ENCODE measurements at regions of chr15 and their contacts with region 1.

Region 1: GRCh38 chr15:84716036-84716799 is at the start of gene SEC11A:
- DNase-seq: peak; percentile 93
- ATAC-seq: peak; percentile 98
- H3K4me3 Mint-ChIP-seq: peak within 1 kb of the TSS; percentile 95
- H3K27ac Mint-ChIP-seq: peak within 1 kb of the TSS; percentile 98
- H3K4me1 Mint-ChIP-seq: peaks cover 55% of the 10 kb centered on the region
- H3K27me3 Mint-ChIP-seq: no peaks in the 10 kb centered on the region
- total RNA-seq, gene SEC11A: 117 to 119 TPM

Region 2: DNA sequence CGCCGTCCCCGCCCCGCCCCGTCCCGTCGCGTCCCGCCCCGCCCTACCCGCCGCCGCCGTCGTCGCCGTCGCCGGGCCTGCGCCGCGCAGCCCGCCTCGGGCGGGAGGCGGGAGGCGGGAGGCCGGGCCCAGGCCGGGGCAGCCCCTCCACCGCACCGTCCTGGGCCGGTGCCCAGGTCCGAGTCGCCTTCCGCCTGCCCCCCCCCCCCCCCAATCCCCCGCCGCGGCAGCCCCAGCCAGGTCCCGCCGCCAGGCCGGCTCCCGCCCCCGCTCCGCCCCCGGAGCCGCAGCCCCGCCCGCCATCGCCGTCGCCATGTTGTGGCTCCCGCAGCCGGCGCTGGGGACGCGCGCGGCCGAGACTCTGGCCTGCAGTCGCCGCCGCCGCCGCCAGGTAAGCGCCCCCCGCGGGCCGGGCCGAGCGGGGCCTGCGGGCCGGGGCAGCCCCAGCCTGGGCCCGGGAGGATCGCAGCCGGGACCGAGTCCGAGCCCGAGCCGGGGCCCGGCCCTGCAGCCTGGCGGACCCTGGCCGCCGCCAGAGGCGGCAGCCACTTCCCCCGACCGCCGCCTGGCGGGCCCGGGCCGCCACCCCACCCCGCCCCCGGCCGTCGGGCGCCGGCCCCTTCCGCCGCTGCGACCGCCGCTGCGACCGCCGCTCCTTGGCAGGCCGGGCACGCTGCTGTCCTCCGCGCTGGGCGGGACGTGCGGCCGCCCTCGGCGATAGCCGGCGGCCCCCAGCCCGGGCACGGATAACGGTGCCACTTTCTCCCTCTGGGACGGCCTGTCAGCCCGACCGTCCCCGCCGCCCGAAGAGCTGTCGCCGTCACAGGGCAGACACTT is 32.3 kb after region 1 on chr15 and contains the start of gene ZNF592:
- CTCF ChIA-PET with region 1: interaction called, 16 read pairs
- POLR2A ChIA-PET with region 1: interaction called, 74 read pairs
- DNase-seq: peak; percentile 82
- ATAC-seq: peak; percentile 68
- H3K4me3 Mint-ChIP-seq: peak within 1 kb of the TSS; percentile 96
- H3K27ac Mint-ChIP-seq: peak within 1 kb of the TSS; percentile 95
- H3K4me1 Mint-ChIP-seq: peaks cover 51% of the 10 kb centered on the region
- H3K27me3 Mint-ChIP-seq: no peaks in the 10 kb centered on the region
- total RNA-seq, gene ZNF592: 36.5 to 36.6 TPM

Region 3: GRCh38 chr15:84836844-84837243 is 120.6 kb after region 1 on chr15:
- CTCF ChIA-PET with region 1: no interaction called
- POLR2A ChIA-PET with region 1: no interaction called
- DNase-seq: no peak
- ATAC-seq: no peak
- H3K4me3 Mint-ChIP-seq: no peak overlapping the region
- H3K27ac Mint-ChIP-seq: no peak overlapping the region
- H3K4me1 Mint-ChIP-seq: no peaks in the 10 kb centered on the region
- H3K27me3 Mint-ChIP-seq: peaks cover 22% of the 10 kb centered on the region

Measured in activated CD8-positive, alpha-beta T cell treated with anti-CD3 and anti-CD28 coated beads, Interleukin-2, amount 10 ng/mL, durations not matched to agents 7 days and 5 days (primary cell).